Activated naive CD4-positive, alpha-beta T cell treated with anti-CD3 and anti-CD28 coated beads for 36 hours (primary cell): ENCODE measurements at regions of chr3 and their contacts with region 1.

Region 1: DNA sequence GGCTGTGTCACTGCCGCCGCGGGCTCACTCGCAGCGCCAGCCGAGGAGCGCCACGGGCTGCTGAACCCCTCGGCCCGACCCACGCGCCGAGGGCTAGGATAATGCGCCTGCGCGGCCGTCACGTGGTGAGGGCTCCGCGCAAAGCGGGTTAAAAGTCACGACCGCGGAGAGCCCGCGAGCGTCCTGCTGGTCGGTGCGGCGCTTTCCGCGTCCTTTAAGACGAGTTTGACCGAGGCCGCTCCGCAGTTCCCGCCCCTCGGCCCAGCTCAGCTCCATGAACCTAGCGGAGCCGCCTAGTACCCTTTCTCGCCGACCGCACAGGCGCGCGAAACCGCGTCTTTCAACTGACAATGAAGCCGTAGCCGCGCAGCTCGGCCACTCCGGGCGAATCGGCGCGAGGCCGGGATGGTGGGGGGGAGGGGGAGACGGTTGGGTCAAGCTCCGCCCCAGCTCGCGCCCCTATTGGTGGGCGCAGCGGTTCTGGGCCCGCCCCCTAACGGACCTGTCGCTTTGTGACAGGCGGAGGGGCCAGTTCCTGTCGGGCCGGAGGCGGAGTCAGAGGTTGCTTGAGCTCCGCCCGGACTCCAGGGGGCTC is 636 bp upstream of the STT3B start:
- DNase-seq: peak; percentile 99
- H3K4me3 Mint-ChIP-seq: peak overlapping the region; percentile 95
- H3K27ac Mint-ChIP-seq: peak overlapping the region; percentile 99
- H3K4me1 Mint-ChIP-seq: peaks cover 13% of the 10 kb centered on the region
- H3K27me3 Mint-ChIP-seq: no peaks in the 10 kb centered on the region

Region 2: DNA sequence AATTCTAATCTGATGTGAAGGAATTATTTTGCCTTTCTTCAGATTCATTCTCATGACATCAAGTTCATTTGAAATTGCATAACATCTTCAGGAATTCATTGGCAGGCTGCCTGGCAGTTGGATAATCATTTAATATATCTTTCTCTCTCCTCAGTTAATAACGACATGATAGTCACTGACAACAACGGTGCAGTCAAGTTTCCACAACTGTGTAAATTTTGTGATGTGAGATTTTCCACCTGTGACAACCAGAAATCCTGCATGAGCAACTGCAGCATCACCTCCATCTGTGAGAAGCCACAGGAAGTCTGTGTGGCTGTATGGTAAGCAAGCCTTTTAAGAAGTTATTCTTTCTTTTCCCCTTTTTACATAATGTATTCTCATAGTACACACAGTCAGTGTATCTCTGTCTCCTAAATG is 887.5 kb before region 1 on chr3:
- CTCF ChIA-PET with region 1: no interaction called
- intact Hi-C with region 1: loop called (anchors 5 kb)
- DNase-seq: peak; percentile 76
- H3K4me3 Mint-ChIP-seq: peak overlapping the region; percentile 56
- H3K27ac Mint-ChIP-seq: peak overlapping the region; percentile 98
- H3K4me1 Mint-ChIP-seq: peaks cover 92% of the 10 kb centered on the region
- H3K27me3 Mint-ChIP-seq: no peaks in the 10 kb centered on the region

Region 3: DNA sequence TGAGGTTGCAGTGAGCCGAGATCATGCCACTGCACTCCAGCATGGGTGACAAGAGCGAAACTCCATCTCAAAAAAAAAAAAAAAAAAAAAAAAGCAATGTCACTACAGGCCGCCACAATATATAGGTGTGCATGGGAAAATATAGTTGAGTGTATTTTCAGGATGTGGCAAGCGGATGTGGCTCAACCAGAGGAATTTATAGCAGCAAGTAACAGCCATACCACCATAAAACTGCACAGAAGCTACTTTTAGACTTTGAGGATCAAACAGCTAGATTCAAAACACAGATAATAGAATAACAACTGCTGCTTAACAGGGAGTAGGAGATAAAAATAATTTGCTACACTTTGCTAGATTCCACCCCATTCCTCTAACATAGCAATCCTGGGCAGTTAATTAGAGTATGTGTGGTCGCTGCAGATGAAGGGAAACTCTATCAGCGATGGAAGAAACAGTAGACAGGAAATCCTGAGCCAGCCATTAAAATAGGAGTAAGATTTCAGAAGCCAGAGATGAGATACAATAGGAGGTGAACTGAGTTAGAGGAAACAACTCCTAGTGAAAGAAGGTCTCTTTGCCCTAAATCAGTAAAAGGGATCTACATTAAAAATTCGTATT is 318.1 kb before region 1 on chr3:
- CTCF ChIA-PET with region 1: no interaction called
- intact Hi-C with region 1: loop called (anchors 2 kb)
- DNase-seq: peak; percentile 49
- H3K4me3 Mint-ChIP-seq: no peak overlapping the region
- H3K27ac Mint-ChIP-seq: peak overlapping the region; percentile 3
- H3K4me1 Mint-ChIP-seq: peaks cover 88% of the 10 kb centered on the region
- H3K27me3 Mint-ChIP-seq: no peaks in the 10 kb centered on the region

Region 4: GRCh38 chr3:31462050-31462569 is 70.0 kb before region 1 on chr3:
- CTCF ChIA-PET with region 1: interaction called, 8 read pairs
- intact Hi-C with region 1: loop called (anchors 1 kb)
- DNase-seq: peak; percentile 56
- H3K4me3 Mint-ChIP-seq: peak overlapping the region; percentile 35
- H3K27ac Mint-ChIP-seq: peak overlapping the region; percentile 70
- H3K4me1 Mint-ChIP-seq: peaks cover 51% of the 10 kb centered on the region
- H3K27me3 Mint-ChIP-seq: no peaks in the 10 kb centered on the region

Region 5: GRCh38 chr3:31754575-31755278 is 222.6 kb after region 1 on chr3:
- CTCF ChIA-PET with region 1: no interaction called
- intact Hi-C with region 1: loop called (anchors 1 kb)
- DNase-seq: no peak
- H3K4me3 Mint-ChIP-seq: no peak overlapping the region
- H3K27ac Mint-ChIP-seq: peak overlapping the region; percentile 94
- H3K4me1 Mint-ChIP-seq: peaks cover 41% of the 10 kb centered on the region
- H3K27me3 Mint-ChIP-seq: peaks cover 2% of the 10 kb centered on the region

Region 6: GRCh38 chr3:32684800-32685542 is 1152.9 kb after region 1 on chr3 and contains the start of gene CNOT10:
- CTCF ChIA-PET with region 1: no interaction called
- intact Hi-C with region 1: loop called (anchors 2 kb)
- DNase-seq: peak; percentile 97
- H3K4me3 Mint-ChIP-seq: peak within 1 kb of the TSS; percentile 90
- H3K27ac Mint-ChIP-seq: peak within 1 kb of the TSS; percentile 86
- H3K4me1 Mint-ChIP-seq: peaks cover 32% of the 10 kb centered on the region
- H3K27me3 Mint-ChIP-seq: no peaks in the 10 kb centered on the region
- total RNA-seq, gene CNOT10: 40.6 to 46.5 TPM